ENCODE measurements at regions of chr1 and their contacts with region 1.

Region 1: DNA sequence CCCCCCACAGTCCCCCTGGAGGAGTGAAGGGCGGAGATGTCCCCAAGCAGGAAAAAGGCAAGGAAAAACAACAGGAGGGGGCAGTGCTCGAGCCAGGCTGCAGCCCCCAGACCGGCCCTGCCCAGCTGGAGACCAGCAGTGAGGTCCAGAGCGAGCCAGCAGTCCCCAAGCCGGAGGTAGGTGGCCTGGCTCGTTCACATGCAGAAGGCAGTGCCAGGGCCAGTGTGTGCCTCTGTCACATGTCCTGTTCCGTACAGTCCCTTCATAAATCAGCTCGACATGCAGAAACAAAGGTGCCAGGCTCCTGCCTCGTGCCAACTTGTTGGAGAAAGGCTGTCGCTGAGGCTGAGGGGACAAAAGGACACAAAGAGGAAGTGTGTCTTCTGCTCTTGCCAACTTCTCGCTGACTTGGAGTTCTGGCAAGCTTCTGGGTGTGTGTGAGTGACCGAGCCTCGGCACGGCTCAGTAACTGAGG is 24.1 kb upstream of the MPZL1 start:
- DNase-seq: no peak
- ATAC-seq: no peak
- H3K4me3 ChIP-seq: no peak overlapping the region
- H3K4me3 Mint-ChIP-seq: no peak overlapping the region
- H3K27ac ChIP-seq: no peak overlapping the region
- H3K27ac Mint-ChIP-seq: peak overlapping the region; percentile 14
- H3K4me1 ChIP-seq: no peaks in the 10 kb centered on the region
- H3K4me1 Mint-ChIP-seq: no peaks in the 10 kb centered on the region
- H3K27me3 ChIP-seq: no peaks in the 10 kb centered on the region
- H3K27me3 Mint-ChIP-seq: no peaks in the 10 kb centered on the region
- CTCF ChIP-seq: no peak

Region 2: GRCh38 chr1:167430134-167430856 is 267.4 kb before region 1 on chr1:
- CTCF ChIA-PET with region 1: no interaction called
- POLR2A ChIA-PET with region 1: no interaction called
- intact Hi-C with region 1: loop called in 1 of 2 experiments (anchors 10 kb)
- DNase-seq: peak in 1 of 14 experiments; percentile 48
- ATAC-seq: peak; percentile 48
- H3K4me3 ChIP-seq: no peak overlapping the region
- H3K4me3 Mint-ChIP-seq: peak overlapping the region; percentile 72
- H3K27ac ChIP-seq: peak overlapping the region in 1 of 2 donors; percentile 21
- H3K27ac Mint-ChIP-seq: peak overlapping the region; percentile 80
- H3K4me1 ChIP-seq: peaks cover 61% of the 10 kb centered on the region
- H3K4me1 Mint-ChIP-seq: peaks cover 67% of the 10 kb centered on the region
- H3K27me3 ChIP-seq: no peaks in the 10 kb centered on the region
- H3K27me3 Mint-ChIP-seq: no peaks in the 10 kb centered on the region
- CTCF ChIP-seq: no peak

Measured in CD4-positive, alpha-beta T cell (primary cell).